ENCODE measurements at regions of chr15 and their contacts with region 1.

Region 1: DNA sequence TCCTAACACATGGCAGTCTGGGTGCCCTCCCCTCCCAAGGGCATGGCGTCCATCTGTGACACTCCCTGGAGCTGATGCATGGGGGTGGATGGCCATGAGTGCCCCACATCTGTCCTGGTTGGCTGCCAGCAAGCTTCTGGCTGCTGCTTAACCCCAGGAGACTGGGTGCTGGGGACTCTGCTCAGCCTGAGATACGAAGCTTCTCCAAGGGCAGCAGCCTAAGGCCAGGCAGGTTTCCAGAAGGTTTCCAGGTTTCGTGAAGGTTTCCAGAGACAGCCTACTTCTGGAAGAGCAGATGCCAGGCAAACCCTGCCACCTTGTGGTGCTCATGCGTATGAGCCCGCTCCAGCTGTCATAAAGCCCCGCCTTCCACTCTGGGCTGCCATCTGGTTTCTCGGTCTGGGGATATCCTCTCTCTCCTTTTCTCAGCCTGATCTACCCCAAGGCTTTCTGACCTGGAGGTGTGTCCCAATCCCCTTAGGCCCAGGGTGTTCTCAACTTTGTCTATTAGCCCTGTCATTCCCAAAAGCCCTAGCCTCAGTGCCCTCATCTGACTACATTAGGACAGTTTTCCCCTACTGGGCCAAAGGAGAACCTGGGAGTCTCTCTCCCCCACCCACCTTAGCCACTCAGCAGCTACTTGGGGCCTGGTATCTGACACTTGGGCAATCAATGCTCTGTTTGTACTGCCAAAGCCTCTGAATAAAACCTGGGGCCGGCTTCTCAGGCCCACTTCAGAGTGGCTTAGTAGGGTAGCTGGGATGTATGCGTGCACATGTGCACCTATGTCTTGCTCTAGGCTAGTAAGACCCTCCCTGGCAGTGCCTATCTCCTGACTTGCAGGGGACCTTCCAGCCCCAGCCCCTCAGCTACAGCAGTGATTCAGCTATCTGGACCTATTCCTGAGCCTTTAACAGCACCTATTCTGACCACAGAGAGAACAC is 12.0 kb downstream of the MRPL46 start:
- DNase-seq: peak; percentile 66
- H3K4me3 Mint-ChIP-seq: no peak overlapping the region
- H3K27ac Mint-ChIP-seq: no peak overlapping the region
- H3K4me1 Mint-ChIP-seq: peaks cover 4% of the 10 kb centered on the region
- H3K27me3 Mint-ChIP-seq: peaks cover 2% of the 10 kb centered on the region

Region 2: DNA sequence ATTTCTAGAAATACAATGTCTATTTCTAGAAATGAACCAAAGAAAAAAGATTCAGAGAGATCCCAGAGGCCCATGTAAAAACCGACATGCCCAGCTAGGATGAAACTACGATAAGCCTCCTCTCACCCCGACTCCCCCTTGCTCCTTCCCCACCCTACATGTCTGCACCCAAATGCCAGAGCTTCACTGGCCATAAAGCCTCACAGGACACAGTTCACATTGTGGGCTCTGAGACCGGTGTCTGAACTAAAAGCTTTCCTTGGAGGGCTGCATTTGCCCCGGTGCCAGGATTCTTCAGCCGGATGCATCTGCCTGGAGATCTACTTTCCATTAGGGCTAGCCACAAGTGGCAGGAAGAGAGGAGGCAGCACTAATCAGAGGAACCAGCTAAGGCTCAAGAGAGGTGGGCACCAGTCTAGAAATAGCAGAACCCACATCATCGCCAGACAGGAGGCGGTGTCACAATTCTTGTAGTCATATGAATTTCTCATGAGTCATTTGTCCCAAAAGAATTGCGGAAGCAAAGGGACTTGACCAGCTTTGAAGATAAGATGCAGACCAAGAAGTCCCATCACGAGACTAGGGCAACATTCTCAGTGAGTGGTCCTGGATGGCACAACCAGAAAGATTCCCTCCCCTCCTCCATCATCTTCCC is 552.2 kb before region 1 on chr15:
- CTCF ChIA-PET with region 1: no interaction called
- POLR2A ChIA-PET with region 1: no interaction called
- intact Hi-C with region 1: no loop called
- DNase-seq: no peak
- H3K4me3 Mint-ChIP-seq: no peak overlapping the region
- H3K27ac Mint-ChIP-seq: no peak overlapping the region
- H3K4me1 Mint-ChIP-seq: no peaks in the 10 kb centered on the region
- H3K27me3 Mint-ChIP-seq: no peaks in the 10 kb centered on the region

Region 3: GRCh38 chr15:88274553-88275460 is 180.3 kb before region 1 on chr15:
- CTCF ChIA-PET with region 1: interaction called, 38 read pairs
- POLR2A ChIA-PET with region 1: no interaction called
- intact Hi-C with region 1: no loop called
- DNase-seq: peak; percentile 77
- H3K4me3 Mint-ChIP-seq: no peak overlapping the region
- H3K27ac Mint-ChIP-seq: no peak overlapping the region
- H3K4me1 Mint-ChIP-seq: no peaks in the 10 kb centered on the region
- H3K27me3 Mint-ChIP-seq: peaks cover 13% of the 10 kb centered on the region

Region 4: DNA sequence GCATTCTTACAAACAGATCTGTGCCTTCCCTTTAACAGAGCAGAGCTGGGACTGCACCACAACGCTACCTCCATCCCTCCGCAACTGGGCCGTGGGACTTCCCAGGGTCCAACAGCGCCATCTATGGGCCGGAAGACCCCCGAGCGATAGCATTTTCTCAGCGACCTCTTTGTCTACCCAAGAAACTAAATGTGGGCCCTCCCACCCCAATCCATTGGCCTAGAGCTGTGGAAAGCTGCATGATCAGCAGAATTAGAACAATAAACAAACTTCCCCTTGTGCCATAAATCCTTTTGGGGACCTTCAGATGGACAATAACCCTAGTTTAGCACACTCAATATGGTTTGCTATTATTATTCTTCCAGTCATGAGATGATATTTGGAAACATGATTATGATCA is 123.9 kb before region 1 on chr15:
- CTCF ChIA-PET with region 1: interaction called, 3 read pairs
- POLR2A ChIA-PET with region 1: no interaction called
- intact Hi-C with region 1: loop called (anchors 10 kb)
- DNase-seq: peak; percentile 68
- H3K4me3 Mint-ChIP-seq: no peak overlapping the region
- H3K27ac Mint-ChIP-seq: no peak overlapping the region
- H3K4me1 Mint-ChIP-seq: no peaks in the 10 kb centered on the region
- H3K27me3 Mint-ChIP-seq: peaks cover 11% of the 10 kb centered on the region

Region 5: DNA sequence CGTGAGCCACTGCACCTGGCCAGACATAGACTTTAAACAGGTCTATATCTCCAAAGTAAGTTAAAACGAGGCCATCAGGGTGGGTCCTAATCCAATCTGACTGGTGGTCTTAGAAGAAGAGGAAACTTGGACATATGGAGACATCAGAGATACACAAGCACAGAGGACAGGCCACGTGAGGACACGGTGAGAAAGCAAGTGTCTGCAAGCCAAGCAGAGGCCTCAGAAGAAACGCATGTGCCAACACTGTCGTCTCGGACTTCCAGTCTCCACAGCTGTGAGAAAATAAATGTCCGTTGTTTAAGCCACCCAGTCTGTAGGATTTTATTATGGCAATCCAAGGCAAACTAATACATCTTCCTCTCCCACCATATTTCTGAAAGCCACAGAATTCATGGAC is 31.8 kb before region 1 on chr15:
- CTCF ChIA-PET with region 1: no interaction called
- POLR2A ChIA-PET with region 1: no interaction called
- intact Hi-C with region 1: no loop called
- DNase-seq: no peak
- H3K4me3 Mint-ChIP-seq: no peak overlapping the region
- H3K27ac Mint-ChIP-seq: no peak overlapping the region
- H3K4me1 Mint-ChIP-seq: peaks cover 16% of the 10 kb centered on the region
- H3K27me3 Mint-ChIP-seq: peaks cover 43% of the 10 kb centered on the region